Common myeloid progenitor, CD34-positive (primary cell): ENCODE measurements at regions of chr1 and their contacts with region 1.

Region 1: GRCh38 chr1:53462769-53463501 is 3.7 kb downstream of the DMRTB1 start:
- DNase-seq: no peak
- H3K4me3 ChIP-seq: no peak overlapping the region
- H3K27ac ChIP-seq: no peak overlapping the region
- H3K4me1 ChIP-seq: peaks cover 0 to 22% (median 8%) of the 10 kb centered on the region in 4 experiments
- H3K27me3 ChIP-seq: peaks cover 0 to 2% (median 0%) of the 10 kb centered on the region in 5 experiments

Region 2: DNA sequence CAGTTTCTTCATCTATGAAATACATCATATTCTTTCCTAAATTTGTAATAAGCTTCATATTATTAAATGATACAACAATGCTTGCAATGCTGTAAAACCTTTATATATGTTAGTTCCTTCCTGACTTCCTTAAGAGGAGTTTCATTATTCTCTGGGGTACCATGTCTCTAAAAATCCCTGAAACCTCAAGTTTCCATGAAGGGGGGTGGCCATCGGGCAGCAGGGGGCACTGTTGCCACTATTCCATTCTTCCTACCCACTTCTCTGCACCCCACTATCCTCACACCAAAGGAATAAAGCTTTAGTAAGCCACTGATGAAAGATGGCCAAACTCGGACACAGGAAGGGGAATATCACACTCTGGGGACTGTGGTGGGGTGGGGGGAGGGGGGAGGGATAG is 12.7 kb before region 1 on chr1:
- CTCF ChIA-PET with region 1: interaction called, 15 read pairs
- POLR2A ChIA-PET with region 1: interaction called, 3 read pairs
- DNase-seq: peak in 2 of 3 donors; percentile 12 to 23
- H3K4me3 ChIP-seq: no peak overlapping the region
- H3K27ac ChIP-seq: no peak overlapping the region
- H3K4me1 ChIP-seq: no peaks in the 10 kb centered on the region
- H3K27me3 ChIP-seq: peaks cover 0 to 2% (median 0%) of the 10 kb centered on the region in 5 experiments

Region 3: DNA sequence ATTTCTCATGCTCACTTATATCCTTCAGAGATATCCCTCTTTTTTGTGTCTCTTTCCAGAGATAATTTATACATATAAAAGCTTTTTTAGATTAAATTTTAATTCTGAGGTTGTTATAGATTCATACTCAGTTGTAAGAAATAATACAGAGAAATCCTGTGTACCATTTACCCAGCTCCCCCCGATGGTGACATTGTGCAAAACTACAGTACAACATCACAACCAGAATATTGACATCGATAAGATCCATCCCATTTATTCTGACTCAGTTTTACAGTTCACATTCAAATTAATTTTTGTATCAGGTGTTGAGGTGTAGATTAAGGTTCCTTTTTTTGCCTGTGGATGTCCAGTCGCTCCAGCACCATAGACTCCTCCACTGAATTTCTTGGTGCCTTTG is 10.5 kb after region 1 on chr1:
- CTCF ChIA-PET with region 1: interaction called, 25 read pairs
- POLR2A ChIA-PET with region 1: no interaction called
- DNase-seq: peak in 2 of 3 donors; percentile 11 to 14
- H3K4me3 ChIP-seq: no peak overlapping the region
- H3K27ac ChIP-seq: no peak overlapping the region
- H3K4me1 ChIP-seq: peaks cover 0 to under 1% (median 0%) of the 10 kb centered on the region in 4 experiments
- H3K27me3 ChIP-seq: peaks cover 0 to 3% (median 0%) of the 10 kb centered on the region in 5 experiments

Region 4: DNA sequence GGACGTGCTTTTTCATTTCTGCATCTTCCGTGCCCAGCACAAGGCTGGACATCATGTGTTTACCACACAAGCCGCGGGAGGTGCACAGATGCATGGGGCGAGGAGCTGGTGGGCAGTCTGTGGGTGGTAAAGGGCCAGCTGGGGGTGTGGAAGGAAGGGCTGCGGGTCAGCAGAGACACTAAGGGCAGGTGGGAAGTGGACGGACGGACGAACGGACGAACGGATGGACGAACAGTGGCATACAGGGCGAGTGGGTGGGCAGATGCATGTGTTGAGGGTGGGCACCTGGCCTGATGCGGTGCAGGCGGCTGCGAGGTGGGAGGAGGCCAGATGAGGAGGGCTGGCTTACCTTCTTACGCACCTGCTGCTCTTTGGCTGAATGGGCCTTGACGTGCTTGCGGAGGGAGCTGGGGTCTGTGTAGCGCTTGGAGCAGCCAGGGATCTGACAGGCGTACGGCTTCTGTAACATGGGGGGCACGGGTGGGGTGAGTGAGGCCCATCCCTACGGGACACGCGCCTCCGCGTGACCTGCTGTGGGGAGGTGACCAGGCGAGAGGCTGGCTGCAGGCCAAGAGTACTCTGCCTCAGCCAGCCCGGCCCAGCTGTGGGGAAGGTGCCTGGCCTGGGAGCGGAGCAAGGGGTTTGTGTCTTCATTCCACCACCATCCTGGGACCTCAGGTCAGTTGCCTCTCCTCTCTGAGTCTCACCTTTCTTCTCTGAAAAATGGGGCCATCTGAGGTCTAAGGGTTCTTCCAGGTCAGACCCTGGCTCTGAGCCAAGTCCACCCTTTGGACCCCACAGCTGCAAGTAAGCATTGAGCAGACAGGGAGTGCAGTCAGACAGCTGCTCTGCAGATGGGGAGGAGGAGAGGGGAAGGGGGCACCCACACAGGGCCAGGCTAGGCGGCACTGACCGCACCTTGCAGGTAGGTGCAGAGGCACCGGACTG is 61.8 kb after region 1 on chr1:
- CTCF ChIA-PET with region 1: no interaction called
- POLR2A ChIA-PET with region 1: no interaction called
- DNase-seq: no peak
- H3K4me3 ChIP-seq: no peak overlapping the region
- H3K27ac ChIP-seq: no peak overlapping the region
- H3K4me1 ChIP-seq: peaks cover 0 to 2% (median 1%) of the 10 kb centered on the region in 4 experiments
- H3K27me3 ChIP-seq: no peaks in the 10 kb centered on the region

Region 5: GRCh38 chr1:53535846-53536245 is 72.9 kb after region 1 on chr1:
- CTCF ChIA-PET with region 1: no interaction called
- POLR2A ChIA-PET with region 1: no interaction called
- DNase-seq: no peak
- H3K4me3 ChIP-seq: no peak overlapping the region
- H3K27ac ChIP-seq: no peak overlapping the region
- H3K4me1 ChIP-seq: peaks cover 0 to 17% (median 8%) of the 10 kb centered on the region in 4 experiments
- H3K27me3 ChIP-seq: no peaks in the 10 kb centered on the region